ENCODE measurements at regions of chr11 and their contacts with region 1.

Region 1: GRCh38 chr11:58394195-58394594 is 12.5 kb downstream of the OR5B3 start:
- DNase-seq: peak; percentile 99
- ATAC-seq: peak; percentile 65
- H3K4me3 ChIP-seq: peak overlapping the region; percentile 36; the same call in 1 of the 2 replicates
- H3K27ac ChIP-seq: peak overlapping the region; percentile 89
- H3K4me1 ChIP-seq: peaks cover 55% of the 10 kb centered on the region
- H3K27me3 ChIP-seq: no peaks in the 10 kb centered on the region
- CTCF ChIP-seq: no peak

Region 2: GRCh38 chr11:58286249-58286648 is 107.9 kb before region 1 on chr11:
- CTCF ChIA-PET with region 1: no interaction called
- POLR2A ChIA-PET with region 1: no interaction called
- intact Hi-C with region 1: loop called (anchors 5 kb)
- DNase-seq: peak; percentile 66
- ATAC-seq: peak; percentile 99
- H3K4me3 ChIP-seq: no peak overlapping the region
- H3K27ac ChIP-seq: no peak overlapping the region
- H3K4me1 ChIP-seq: peaks cover 8% of the 10 kb centered on the region; the same call in 1 of the 2 replicates
- H3K27me3 ChIP-seq: no peaks in the 10 kb centered on the region
- CTCF ChIP-seq: peak; percentile 87

Region 3: GRCh38 chr11:58301576-58301975 is 92.6 kb before region 1 on chr11:
- CTCF ChIA-PET with region 1: no interaction called
- POLR2A ChIA-PET with region 1: no interaction called
- intact Hi-C with region 1: no loop called
- DNase-seq: peak; percentile 85
- ATAC-seq: peak; percentile 87
- H3K4me3 ChIP-seq: no peak overlapping the region
- H3K27ac ChIP-seq: no peak overlapping the region
- H3K4me1 ChIP-seq: peaks cover 8% of the 10 kb centered on the region; the same call in 1 of the 2 replicates
- H3K27me3 ChIP-seq: no peaks in the 10 kb centered on the region
- CTCF ChIP-seq: no peak

Region 4: DNA sequence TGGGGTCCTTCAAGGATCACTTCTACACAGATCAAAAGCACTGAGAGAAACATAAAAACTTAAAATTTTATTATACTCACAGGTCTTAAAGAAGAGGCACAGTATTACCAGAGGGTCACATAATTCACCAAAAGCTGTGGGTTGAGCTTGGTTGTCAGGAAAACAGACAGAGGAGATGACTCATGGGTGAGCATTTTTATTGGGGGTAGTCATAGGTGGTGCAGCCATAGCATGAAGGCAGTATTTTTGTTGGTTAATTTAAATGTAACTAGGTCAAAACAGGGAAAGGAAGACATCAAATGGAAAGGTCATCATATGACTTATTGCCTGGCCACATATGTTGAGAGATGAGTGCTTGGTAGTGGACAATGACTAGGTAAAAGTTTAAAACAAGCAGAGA is 59.5 kb before region 1 on chr11:
- CTCF ChIA-PET with region 1: no interaction called
- POLR2A ChIA-PET with region 1: interaction called, 3 read pairs
- intact Hi-C with region 1: loop called (anchors 1 kb)
- DNase-seq: peak; percentile 97
- ATAC-seq: peak; percentile 100
- H3K4me3 ChIP-seq: no peak overlapping the region
- H3K27ac ChIP-seq: peak overlapping the region; percentile 69
- H3K4me1 ChIP-seq: peaks cover 25% of the 10 kb centered on the region
- H3K27me3 ChIP-seq: no peaks in the 10 kb centered on the region
- CTCF ChIP-seq: no peak

Region 5: DNA sequence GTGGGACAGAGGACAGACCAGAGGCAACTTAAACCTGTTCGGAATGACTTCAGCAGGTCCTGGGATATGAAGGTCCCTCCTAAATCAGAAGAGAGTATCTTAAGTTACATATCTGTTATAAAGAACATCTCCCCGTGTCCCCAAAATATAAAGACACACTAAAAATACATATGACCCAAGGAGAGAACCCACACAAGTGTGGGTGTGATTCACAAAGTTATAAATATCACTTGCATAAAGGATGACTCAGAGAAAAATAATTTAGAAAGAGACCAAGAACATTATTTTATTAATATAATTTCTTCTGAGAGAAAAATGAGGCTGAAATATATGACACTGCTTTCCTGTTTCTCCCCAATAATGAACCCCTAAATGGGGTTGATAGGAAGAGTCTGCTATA is 99.5 kb after region 1 on chr11:
- CTCF ChIA-PET with region 1: no interaction called
- POLR2A ChIA-PET with region 1: no interaction called
- intact Hi-C with region 1: loop called (anchors 1 kb)
- DNase-seq: peak; percentile 47
- ATAC-seq: peak; percentile 66
- H3K4me3 ChIP-seq: no peak overlapping the region
- H3K27ac ChIP-seq: no peak overlapping the region
- H3K4me1 ChIP-seq: peaks cover 19% of the 10 kb centered on the region
- H3K27me3 ChIP-seq: no peaks in the 10 kb centered on the region
- CTCF ChIP-seq: no peak

Measured in PC-3 (cell line).